T-cell (primary cell): ENCODE measurements at regions of chr2 and their contacts with region 1.

Region 1: DNA sequence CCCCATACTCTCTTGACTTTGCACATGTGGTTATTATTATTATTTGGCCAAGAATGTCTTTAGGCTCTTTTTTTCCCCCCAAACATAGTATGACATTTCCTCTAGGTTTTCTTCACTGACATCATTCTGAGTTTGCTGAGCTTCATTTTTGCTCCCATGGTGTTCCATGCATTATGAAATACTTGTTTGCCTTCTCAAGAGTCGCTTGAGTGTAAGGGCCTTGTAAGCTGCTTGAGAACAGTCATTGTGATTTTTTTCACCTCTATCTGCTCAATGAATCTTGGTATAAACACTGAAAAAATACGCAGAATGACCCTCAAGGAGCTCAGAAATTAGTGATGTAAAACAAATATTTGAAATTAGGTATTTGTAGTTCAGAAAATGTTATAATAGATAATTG is 688.9 kb downstream of the CNTNAP5 start:
- DNase-seq: no peak
- ATAC-seq: no peak
- H3K4me3 ChIP-seq: no peak overlapping the region
- H3K4me3 Mint-ChIP-seq: no peak overlapping the region
- H3K27ac ChIP-seq: no peak overlapping the region
- H3K27ac Mint-ChIP-seq: no peak overlapping the region
- H3K4me1 ChIP-seq: no peaks in the 10 kb centered on the region
- H3K4me1 Mint-ChIP-seq: no peaks in the 10 kb centered on the region
- H3K27me3 ChIP-seq: no peaks in the 10 kb centered on the region
- H3K27me3 Mint-ChIP-seq: no peaks in the 10 kb centered on the region

Region 2: DNA sequence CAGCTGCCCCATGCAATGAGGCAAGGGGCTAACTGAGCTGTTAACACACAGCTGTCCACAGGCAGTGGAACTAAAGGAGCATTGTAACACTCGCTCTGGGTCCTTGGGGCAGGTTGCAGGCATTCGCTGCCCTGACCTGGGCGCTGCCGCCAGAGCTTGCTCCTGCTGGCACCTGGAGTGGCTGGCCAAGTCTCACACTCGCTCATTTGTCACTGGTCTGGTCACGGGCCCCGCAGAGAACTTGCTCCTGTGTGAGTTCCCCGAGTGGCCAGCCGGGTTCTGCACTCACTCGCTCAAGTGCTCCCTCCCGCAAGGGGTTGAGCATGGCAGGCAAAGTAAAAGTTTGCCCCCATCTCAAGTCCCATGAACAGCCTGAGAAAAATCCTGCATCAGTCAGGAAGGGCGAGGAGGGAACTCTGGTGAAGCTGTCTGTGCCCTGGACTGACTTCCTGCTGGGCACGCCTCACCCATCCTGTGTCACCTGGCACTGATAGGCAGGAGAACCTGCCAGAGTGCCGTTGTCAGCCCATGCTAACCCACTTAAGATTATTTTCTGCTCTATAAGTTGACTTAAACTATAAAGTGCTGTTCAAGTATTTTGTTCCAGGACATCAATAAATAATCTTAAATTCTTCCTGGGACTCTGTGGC is 1007.2 kb after region 1 on chr2:
- CTCF ChIA-PET with region 1: no interaction called
- POLR2A ChIA-PET with region 1: interaction called in 1 of 2 experiments, 13 read pairs
- DNase-seq: no peak
- ATAC-seq: no peak
- H3K4me3 ChIP-seq: no peak overlapping the region
- H3K4me3 Mint-ChIP-seq: no peak overlapping the region
- H3K27ac ChIP-seq: no peak overlapping the region
- H3K27ac Mint-ChIP-seq: no peak overlapping the region
- H3K4me1 ChIP-seq: no peaks in the 10 kb centered on the region
- H3K4me1 Mint-ChIP-seq: no peaks in the 10 kb centered on the region
- H3K27me3 ChIP-seq: no peaks in the 10 kb centered on the region
- H3K27me3 Mint-ChIP-seq: no peaks in the 10 kb centered on the region